Right ventricle myocardium inferior (tissue), 1 donor: ENCODE measurements at regions of chr6 and their contacts with region 1.

Region 1: GRCh38 chr6:128889870-128890269 is 6.9 kb downstream of the LAMA2 start:
- DNase-seq: no peak
- ATAC-seq: peak; percentile 57

Region 2: DNA sequence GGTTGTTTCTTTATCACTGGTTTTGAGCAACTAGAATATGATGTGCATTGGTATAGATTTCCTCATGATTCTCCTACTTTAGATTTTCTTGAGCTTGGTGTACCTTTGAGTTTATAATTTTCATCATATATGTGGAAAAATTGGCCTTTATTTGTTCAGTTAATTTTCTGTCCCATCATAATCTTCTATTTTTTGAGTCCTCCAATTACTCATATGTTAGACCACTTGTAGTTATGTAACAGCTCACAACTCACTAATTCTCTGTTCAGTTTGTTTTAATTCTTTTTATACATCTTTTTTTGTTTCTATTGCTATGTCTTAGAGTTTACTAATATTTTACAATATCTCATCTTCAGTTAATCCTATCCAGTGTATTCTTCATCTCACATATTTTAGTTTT is 88.2 kb before region 1 on chr6:
- intact Hi-C with region 1: no loop called
- DNase-seq: no peak
- ATAC-seq: no peak

Region 3: DNA sequence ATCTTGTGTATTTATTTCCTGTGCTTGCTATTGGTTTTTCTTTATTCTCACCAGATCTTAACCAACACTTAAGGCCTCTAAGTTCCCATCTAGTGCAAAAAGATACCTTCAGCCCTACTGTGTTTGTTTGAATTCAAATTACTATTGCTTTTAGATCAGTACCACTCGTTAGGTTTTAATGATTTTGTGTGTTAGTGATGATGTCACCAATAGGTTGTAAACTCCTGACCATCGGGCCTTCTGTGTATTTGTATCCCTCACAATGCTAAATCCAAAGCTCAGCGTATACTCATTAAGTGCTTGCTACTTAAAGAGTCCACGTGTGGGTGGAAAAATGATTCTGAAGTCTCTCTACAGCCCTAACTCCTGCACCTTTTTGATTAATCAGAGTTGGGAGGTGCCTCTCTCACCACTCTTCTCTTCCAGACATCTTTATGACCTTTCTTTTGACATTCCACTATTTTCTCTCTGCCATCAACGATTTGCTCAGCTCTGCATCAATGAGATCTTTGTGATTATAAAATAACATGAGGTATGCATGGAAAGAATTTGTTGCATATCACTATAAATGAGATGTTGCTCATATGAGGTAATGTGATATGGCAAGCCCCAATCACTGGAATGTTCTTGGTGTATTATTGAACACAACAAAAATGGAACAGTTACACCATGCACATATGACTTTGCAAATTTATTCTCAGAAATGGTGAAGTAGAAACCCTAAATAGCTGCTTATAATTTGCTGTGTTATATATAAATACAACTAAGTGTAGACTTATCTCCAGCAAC is 62.0 kb before region 1 on chr6:
- intact Hi-C with region 1: no loop called
- DNase-seq: no peak
- ATAC-seq: peak; percentile 39

Region 4: DNA sequence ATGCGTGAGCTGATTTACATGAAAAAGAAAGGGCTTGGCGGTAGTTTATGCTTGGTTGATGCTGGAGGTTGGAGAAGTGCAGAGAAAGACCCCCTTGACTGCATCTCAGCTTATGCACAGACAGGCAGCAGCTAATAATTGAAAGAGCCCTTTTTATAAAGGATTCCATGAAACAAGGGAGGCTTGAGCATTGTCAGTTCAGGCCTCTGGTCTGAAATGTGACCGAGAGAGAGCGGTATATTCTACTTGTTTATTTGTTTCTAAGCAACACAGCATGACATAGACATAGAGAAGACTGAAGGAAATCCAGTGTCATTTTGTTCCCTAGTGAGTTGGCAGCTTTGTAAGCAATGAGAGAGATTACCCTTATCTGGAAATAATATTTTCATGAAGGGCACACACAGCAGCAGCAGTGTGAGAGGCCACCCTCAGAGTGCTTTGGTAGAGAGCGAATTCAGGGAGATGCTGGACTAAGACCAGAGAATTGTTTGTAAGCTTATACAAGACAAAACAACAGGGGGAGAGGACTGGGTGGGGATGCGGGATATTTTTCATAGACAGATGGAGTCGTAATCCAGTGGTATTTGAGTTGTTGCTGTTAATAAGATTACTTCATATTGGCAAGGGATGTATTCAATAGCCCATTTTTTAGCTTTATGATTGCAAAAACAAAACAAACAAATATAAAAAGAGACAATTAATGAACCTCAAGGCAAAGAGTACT is 41.5 kb before region 1 on chr6:
- intact Hi-C with region 1: loop called (anchors 2 kb)
- DNase-seq: no peak
- ATAC-seq: peak; percentile 90

Region 5: GRCh38 chr6:128925765-128926164 is 35.9 kb after region 1 on chr6:
- intact Hi-C with region 1: no loop called
- DNase-seq: no peak
- ATAC-seq: no peak

Region 6: GRCh38 chr6:129130959-129131681 is 241.2 kb after region 1 on chr6:
- intact Hi-C with region 1: loop called (anchors 2 kb)
- DNase-seq: peak; percentile 73
- ATAC-seq: peak; percentile 84